Activated CD4-positive, alpha-beta memory T cell treated with anti-CD3 and anti-CD28 coated beads, Interleukin-2, amount 10 ng/mL, durations not matched to agents 7 days and 5 days (primary cell): ENCODE measurements at regions of chr15 and their contacts with region 1.

Region 1: GRCh38 chr15:75367913-75368688 is at the start of gene MAN2C1:
- DNase-seq: peak; percentile 93
- H3K4me3 Mint-ChIP-seq: peak within 1 kb of the TSS; percentile 93
- H3K27ac Mint-ChIP-seq: peak within 1 kb of the TSS; percentile 96
- H3K4me1 Mint-ChIP-seq: peaks cover 33% of the 10 kb centered on the region
- H3K27me3 Mint-ChIP-seq: no peaks in the 10 kb centered on the region
- total RNA-seq, gene MAN2C1: 174 to 196 TPM

Region 2: DNA sequence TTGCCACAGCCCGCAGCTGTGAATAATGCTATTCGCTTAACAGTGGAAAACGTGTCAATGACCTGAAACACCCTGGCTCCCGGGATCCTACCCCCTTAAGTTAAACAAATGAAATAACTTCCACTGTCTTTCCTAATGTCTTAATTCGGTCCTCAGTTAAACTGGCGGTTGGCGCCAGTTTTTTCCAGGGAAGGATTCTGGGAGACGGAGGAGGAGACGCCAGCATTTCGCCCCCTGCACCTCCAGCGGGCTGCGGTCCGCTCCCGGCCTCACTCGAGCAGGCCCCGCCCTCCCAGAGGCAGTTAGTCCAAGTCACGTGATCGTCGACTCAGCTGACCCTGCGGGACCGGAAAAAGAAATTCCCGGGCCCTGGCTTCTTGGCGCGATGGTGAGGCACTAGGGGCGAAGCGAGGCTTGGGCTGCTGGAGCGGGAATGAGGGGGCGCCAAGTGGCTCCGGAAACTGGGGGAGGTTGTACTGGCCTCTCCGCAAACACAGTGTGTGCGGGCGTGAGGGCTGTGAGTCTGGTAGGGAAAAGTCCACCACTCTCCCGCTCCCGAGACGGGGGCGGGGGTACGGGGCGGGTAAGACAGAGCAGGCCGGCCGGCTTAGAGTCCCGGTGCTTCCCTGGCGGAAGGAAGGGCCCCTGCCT is 32.3 kb before region 1 on chr15 and contains the start of gene COMMD4:
- CTCF ChIA-PET with region 1: interaction called, 25 read pairs
- POLR2A ChIA-PET with region 1: interaction called, 23 read pairs
- DNase-seq: peak; percentile 88
- H3K4me3 Mint-ChIP-seq: peak within 1 kb of the TSS; percentile 93
- H3K27ac Mint-ChIP-seq: peak within 1 kb of the TSS; percentile 80
- H3K4me1 Mint-ChIP-seq: peaks cover 26% of the 10 kb centered on the region
- H3K27me3 Mint-ChIP-seq: peaks cover 3% of the 10 kb centered on the region
- total RNA-seq, gene COMMD4: 87.8 to 91.0 TPM

Region 3: DNA sequence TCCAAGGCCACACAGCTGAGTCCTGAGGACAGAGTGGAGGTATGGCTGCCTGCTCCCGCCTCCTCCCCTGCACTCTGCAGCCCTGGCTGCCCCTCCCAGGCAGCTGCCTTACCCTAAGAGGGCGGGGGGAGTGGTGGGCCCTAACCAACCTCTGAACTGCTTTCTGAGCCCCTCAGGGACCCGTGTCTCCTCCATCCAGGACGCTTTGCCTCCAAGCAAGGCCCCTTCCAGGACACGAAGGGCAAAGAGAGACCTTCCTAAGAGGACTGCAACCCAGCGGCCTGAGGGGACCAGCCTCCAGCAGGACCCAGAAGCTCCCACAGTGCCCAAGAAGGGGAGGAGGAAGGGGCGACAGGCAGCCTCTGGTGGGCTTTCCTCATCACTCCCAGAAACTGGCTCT is 13.6 kb before region 1 on chr15:
- CTCF ChIA-PET with region 1: interaction called, 17 read pairs
- POLR2A ChIA-PET with region 1: interaction called, 89 read pairs
- DNase-seq: no peak
- H3K4me3 Mint-ChIP-seq: no peak overlapping the region
- H3K27ac Mint-ChIP-seq: no peak overlapping the region
- H3K4me1 Mint-ChIP-seq: peaks cover 19% of the 10 kb centered on the region
- H3K27me3 Mint-ChIP-seq: peaks cover 3% of the 10 kb centered on the region

Region 4: DNA sequence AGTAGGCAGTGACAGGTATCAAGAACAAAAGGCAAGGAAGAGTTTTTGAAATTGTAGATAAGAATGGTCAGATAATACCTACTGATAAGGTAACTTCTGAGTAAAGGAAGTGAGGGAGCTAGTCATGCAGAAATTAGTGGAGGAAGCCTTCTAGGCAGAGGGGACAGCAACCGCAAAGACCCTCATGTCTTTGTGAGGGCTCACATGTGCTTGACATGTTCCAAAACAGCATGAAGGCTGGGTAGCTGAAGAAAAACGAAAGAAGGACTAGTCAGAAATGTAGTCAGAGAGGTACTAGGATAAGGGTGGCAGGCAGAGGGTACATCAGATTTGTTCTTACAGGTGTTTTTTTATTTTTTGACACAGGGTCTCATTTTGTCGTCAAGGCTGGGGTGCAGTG is 78.0 kb after region 1 on chr15:
- CTCF ChIA-PET with region 1: interaction called, 109 read pairs
- POLR2A ChIA-PET with region 1: interaction called, 174 read pairs
- DNase-seq: no peak
- H3K4me3 Mint-ChIP-seq: no peak overlapping the region
- H3K27ac Mint-ChIP-seq: peak overlapping the region; percentile 72
- H3K4me1 Mint-ChIP-seq: peaks cover 56% of the 10 kb centered on the region
- H3K27me3 Mint-ChIP-seq: no peaks in the 10 kb centered on the region

Region 5: GRCh38 chr15:75578948-75579920 is 211.1 kb after region 1 on chr15 and contains the start of gene PTPN9:
- CTCF ChIA-PET with region 1: interaction called, 3 read pairs
- POLR2A ChIA-PET with region 1: interaction called, 15 read pairs
- DNase-seq: peak; percentile 81
- H3K4me3 Mint-ChIP-seq: peak within 1 kb of the TSS; percentile 86
- H3K27ac Mint-ChIP-seq: peak within 1 kb of the TSS; percentile 93
- H3K4me1 Mint-ChIP-seq: peaks cover 24% of the 10 kb centered on the region
- H3K27me3 Mint-ChIP-seq: no peaks in the 10 kb centered on the region
- total RNA-seq, gene PTPN9: 41.4 to 41.6 TPM

Region 6: GRCh38 chr15:75590239-75590638 is 222.1 kb after region 1 on chr15:
- CTCF ChIA-PET with region 1: no interaction called
- POLR2A ChIA-PET with region 1: no interaction called
- DNase-seq: no peak
- H3K4me3 Mint-ChIP-seq: no peak overlapping the region
- H3K27ac Mint-ChIP-seq: peak overlapping the region; percentile 17
- H3K4me1 Mint-ChIP-seq: peaks cover 23% of the 10 kb centered on the region
- H3K27me3 Mint-ChIP-seq: no peaks in the 10 kb centered on the region

Region 7: DNA sequence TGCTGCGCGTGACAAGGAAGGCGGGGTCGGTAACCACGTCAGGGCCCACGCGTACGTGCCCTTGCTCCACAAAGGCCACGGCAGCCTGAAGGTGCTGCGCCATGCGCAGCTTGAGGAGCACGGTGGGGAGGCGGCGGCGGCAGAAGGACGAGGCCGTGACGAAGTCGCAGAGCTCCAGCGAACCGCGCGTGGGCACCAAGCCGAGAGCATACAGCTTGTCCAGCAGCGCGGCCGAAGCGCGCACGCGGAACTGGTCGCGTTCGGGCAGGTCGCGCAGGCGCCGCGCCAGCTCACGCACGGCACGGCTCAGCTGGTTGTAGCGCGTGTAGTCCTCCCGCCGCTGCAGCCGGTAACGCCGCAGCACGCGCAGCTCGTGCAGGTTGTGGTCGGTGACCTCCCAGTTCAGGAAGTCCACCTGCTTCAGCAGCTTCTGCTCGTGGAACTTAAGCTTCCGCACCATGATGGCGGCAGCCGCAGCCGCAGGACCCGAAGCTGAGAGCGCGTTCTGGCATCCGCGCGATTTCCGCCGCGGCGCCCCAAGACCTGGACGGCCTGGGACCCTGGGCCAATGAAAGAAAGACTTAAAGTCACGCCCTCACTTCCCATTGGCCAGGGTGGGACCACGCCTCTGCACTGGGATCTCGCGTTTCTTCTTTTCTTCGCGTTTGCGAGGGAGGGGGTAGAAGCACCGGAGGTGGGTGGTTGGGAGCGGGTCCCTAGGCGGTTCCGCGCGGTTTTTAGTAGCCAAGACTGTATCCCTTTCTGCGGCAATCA is 271.8 kb after region 1 on chr15 and contains the start of gene IMP3:
- CTCF ChIA-PET with region 1: interaction called, 53 read pairs
- POLR2A ChIA-PET with region 1: interaction called, 74 read pairs
- DNase-seq: peak; percentile 96
- H3K4me3 Mint-ChIP-seq: peak within 1 kb of the TSS; percentile 86
- H3K27ac Mint-ChIP-seq: peak within 1 kb of the TSS; percentile 94
- H3K4me1 Mint-ChIP-seq: peaks cover 43% of the 10 kb centered on the region
- H3K27me3 Mint-ChIP-seq: no peaks in the 10 kb centered on the region
- total RNA-seq, gene IMP3: 72.3 to 75.5 TPM